Caco-2 (cell line): ENCODE measurements at regions of chr1 and their contacts with region 1.

Region 1: GRCh38 chr1:52056163-52056936 is at the start of gene BTF3L4:
- DNase-seq: peak; percentile 94 to 95
- H3K4me3 ChIP-seq: peak within 1 kb of the TSS; percentile 58
- H3K4me3 Mint-ChIP-seq: peak within 1 kb of the TSS; percentile 91
- H3K27ac Mint-ChIP-seq: peak within 1 kb of the TSS; percentile 83
- H3K4me1 ChIP-seq: peaks cover 16% of the 10 kb centered on the region; the same call in 1 of the 2 replicates
- H3K4me1 Mint-ChIP-seq: peaks cover 14% of the 10 kb centered on the region
- H3K27me3 ChIP-seq: no peaks in the 10 kb centered on the region
- H3K27me3 Mint-ChIP-seq: no peaks in the 10 kb centered on the region
- CTCF ChIP-seq: no peak
- total RNA-seq, gene BTF3L4: 55.3 and 73.7 TPM in 2 replicates

Region 2: DNA sequence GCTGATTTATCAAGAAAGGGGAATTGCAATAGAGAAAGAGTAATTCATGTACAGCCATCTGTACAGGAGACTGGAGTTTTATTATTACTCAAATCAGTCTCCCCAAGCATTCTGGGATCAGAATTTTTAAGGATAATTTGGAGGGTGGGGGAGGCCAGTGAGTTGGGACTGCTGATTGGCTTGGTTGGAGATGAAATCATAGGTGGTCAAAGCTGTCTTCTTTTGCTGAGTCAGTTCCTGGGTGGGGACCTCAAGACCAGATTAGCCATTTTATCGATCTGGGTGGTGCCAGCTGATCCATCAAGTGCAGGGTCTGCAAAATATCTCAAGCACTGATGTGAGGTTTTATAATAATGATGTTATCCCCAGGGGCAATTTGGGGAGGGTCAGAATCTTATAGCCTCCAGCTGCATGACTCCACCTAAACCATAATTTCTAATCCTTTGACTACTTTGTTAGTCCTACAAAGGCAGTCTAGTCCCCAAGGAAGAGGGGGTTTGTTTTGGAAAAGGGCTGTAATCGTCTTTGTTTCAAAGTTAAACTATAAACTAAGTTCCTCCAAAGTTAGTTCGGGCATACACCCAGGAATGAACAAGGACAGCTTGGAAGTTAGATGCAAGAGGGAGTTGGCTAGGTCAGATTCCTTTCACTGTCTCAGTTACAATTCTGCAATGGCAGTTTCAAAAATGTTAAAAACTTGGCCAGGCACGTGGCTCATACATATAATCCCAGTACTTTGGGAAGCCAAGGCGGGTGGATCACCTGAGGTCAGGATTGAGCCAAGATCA is 48.9 kb before region 1 on chr1:
- CTCF ChIA-PET with region 1: no interaction called
- POLR2A ChIA-PET with region 1: no interaction called
- intact Hi-C with region 1: loop called (anchors 5 kb)
- DNase-seq: peak in 1 of 2 experiments; percentile 9
- H3K4me3 ChIP-seq: peak overlapping the region; percentile 13; the same call in 1 of the 2 replicates
- H3K4me3 Mint-ChIP-seq: peak overlapping the region; percentile 69
- H3K27ac Mint-ChIP-seq: peak overlapping the region; percentile 99
- H3K4me1 ChIP-seq: peaks cover 39% of the 10 kb centered on the region
- H3K4me1 Mint-ChIP-seq: peaks cover 12% of the 10 kb centered on the region
- H3K27me3 ChIP-seq: no peaks in the 10 kb centered on the region
- H3K27me3 Mint-ChIP-seq: no peaks in the 10 kb centered on the region
- CTCF ChIP-seq: no peak

Region 3: DNA sequence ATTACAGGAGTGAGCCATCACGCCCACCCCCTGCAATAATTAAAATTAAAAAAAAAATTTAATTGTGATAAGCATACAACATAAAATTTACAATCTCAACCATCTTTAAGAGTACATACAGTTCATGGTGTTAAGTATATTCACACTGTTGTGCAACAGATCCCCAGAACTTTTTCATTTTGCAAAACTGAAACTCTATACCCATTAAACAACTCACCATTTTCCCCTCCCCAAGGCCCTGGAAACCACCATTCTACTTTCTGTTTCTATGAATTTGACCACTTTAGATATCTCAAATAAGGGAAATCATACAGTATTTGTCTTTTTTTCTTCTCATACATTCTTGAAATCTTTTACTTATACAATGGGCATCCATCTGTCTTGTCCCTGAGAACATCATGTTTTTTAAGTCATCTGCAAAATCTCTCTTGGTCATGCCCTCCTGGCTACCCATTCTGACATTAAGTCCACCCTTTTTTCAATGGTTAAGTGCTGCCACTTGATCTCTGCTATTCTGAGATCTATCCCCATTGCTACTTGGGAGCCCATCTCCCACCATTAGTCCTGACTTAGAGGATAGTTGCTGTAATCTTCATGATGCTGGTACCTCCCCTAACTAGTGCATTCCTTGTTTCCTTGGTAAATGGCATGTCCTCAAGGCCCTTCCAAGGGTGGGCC is 46.1 kb after region 1 on chr1:
- CTCF ChIA-PET with region 1: no interaction called
- POLR2A ChIA-PET with region 1: no interaction called
- intact Hi-C with region 1: no loop called
- DNase-seq: no peak
- H3K4me3 ChIP-seq: no peak overlapping the region
- H3K4me3 Mint-ChIP-seq: no peak overlapping the region
- H3K27ac Mint-ChIP-seq: no peak overlapping the region
- H3K4me1 ChIP-seq: no peaks in the 10 kb centered on the region
- H3K4me1 Mint-ChIP-seq: no peaks in the 10 kb centered on the region
- H3K27me3 ChIP-seq: no peaks in the 10 kb centered on the region
- H3K27me3 Mint-ChIP-seq: no peaks in the 10 kb centered on the region
- CTCF ChIP-seq: no peak